CD4-positive, alpha-beta T cell (primary cell): ENCODE measurements at regions of chr1 and their contacts with region 1.

Region 1: DNA sequence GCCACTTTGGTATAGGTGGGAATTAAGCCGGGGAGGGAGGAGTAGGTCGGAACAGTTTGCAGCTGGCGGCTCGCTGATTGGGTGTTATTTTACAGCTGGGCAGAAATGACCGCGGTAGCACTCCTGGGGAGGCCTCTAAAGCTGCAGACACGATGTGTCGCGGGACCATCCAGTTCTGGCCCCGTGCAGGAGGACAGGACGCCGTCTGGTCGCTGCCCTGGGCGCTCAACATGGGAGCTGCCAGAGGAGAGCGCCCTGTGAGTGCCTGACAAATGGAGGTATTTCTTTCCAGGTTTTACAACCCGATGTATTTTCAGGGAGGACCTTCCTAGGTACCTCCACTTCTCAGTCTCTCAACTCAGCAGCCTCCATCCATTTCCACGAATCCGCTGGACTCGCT is 46.2 kb downstream of the CDC7 start:
- DNase-seq: no peak
- ATAC-seq: no peak
- H3K4me3 ChIP-seq: no peak overlapping the region
- H3K4me3 Mint-ChIP-seq: no peak overlapping the region
- H3K27ac ChIP-seq: peak overlapping the region in 1 of 2 donors; percentile 80
- H3K27ac Mint-ChIP-seq: no peak overlapping the region
- H3K4me1 ChIP-seq: peaks cover 48% of the 10 kb centered on the region
- H3K4me1 Mint-ChIP-seq: peaks cover 56% of the 10 kb centered on the region
- H3K27me3 ChIP-seq: no peaks in the 10 kb centered on the region
- H3K27me3 Mint-ChIP-seq: no peaks in the 10 kb centered on the region
- CTCF ChIP-seq: no peak

Region 2: DNA sequence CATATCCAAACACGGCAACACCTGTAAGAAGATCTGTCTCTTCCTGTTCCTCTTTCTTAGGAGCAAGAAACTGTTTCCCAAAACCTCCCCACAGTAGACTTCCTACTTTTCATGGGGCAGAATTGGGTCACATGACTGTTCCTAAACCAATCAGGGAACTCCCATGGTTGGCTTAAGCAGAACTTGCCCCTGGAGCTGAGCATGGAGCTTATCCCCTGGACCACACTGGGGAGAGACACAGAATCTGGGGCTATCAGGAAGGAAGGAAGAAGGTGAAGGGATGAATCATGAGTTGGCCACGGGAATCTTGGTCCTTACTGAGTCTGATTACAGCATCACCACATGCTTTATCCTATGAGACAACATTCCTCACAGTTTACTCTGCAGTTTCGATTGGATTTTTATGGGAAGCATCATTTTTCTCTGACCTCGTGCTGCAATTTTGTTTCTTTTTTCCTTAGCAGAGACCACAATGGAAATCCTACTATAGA is 35.6 kb after region 1 on chr1:
- CTCF ChIA-PET with region 1: no interaction called
- POLR2A ChIA-PET with region 1: no interaction called
- intact Hi-C with region 1: loop called in 1 of 2 experiments (anchors 5 kb)
- DNase-seq: no peak
- ATAC-seq: no peak
- H3K4me3 ChIP-seq: no peak overlapping the region
- H3K4me3 Mint-ChIP-seq: no peak overlapping the region
- H3K27ac ChIP-seq: no peak overlapping the region
- H3K27ac Mint-ChIP-seq: no peak overlapping the region
- H3K4me1 ChIP-seq: no peaks in the 10 kb centered on the region
- H3K4me1 Mint-ChIP-seq: peaks cover 5% of the 10 kb centered on the region
- H3K27me3 ChIP-seq: no peaks in the 10 kb centered on the region
- H3K27me3 Mint-ChIP-seq: no peaks in the 10 kb centered on the region
- CTCF ChIP-seq: no peak

Region 3: DNA sequence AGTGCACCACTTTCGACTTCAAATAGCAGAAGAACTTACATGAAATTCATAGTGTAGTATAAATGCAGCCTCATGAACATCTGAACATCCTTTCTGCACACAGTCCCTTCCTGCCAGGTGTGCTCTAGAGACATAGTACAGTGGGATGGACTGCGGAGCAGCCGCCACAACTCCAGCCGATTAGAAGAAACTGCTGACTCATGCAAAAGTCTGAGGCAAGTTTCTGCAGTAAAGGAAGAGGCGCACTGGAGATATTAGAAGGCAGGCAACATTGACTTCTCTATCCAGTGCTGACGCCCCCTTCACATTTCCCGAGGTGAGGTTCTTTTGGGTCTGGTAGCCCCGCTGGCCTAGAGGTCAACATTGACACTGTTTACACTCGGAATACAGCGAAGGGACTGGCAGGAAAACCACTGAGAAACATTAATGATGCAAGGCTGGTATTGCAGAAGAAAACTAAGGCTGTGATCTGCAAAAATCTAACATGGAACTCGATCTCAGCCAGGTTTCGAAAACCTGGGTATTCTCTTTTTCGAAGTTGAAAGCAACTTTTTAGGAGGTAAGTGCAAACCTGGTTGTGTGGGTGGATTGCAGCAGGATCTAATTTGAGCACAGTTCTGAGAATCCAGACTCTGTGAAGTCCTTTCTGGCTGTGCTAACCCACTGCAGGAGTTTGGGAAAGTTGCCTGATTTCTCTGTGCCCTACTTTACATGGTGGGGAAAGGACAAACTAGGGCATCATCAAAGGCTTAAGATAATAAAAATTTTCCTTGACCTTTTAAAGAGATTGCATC is 44.5 kb after region 1 on chr1:
- CTCF ChIA-PET with region 1: no interaction called
- POLR2A ChIA-PET with region 1: no interaction called
- intact Hi-C with region 1: loop called in 1 of 2 experiments (anchors 2 kb)
- DNase-seq: peak in 5 of 14 experiments; percentile 4 to 28 (median 24)
- ATAC-seq: peak; percentile 52
- H3K4me3 ChIP-seq: peak overlapping the region; percentile 21
- H3K4me3 Mint-ChIP-seq: peak overlapping the region; percentile 76
- H3K27ac ChIP-seq: no peak overlapping the region
- H3K27ac Mint-ChIP-seq: no peak overlapping the region
- H3K4me1 ChIP-seq: peaks cover 16% of the 10 kb centered on the region
- H3K4me1 Mint-ChIP-seq: peaks cover 20% of the 10 kb centered on the region
- H3K27me3 ChIP-seq: no peaks in the 10 kb centered on the region
- H3K27me3 Mint-ChIP-seq: no peaks in the 10 kb centered on the region
- CTCF ChIP-seq: no peak